H1 (cell line): ENCODE measurements at regions of chr16 and their contacts with region 1.

Region 1: GRCh38 chr16:12228602-12229499 is 252.3 kb downstream of the SNX29 start:
- DNase-seq: peak; percentile 53 to 80
- H3K4me3 ChIP-seq: no peak overlapping the region
- H3K27ac ChIP-seq: no peak overlapping the region
- H3K4me1 ChIP-seq: peaks cover 0 to 9% (median 5%) of the 10 kb centered on the region in 4 experiments; a peak in 3 of 7 replicates
- H3K27me3 ChIP-seq: no peaks in the 10 kb centered on the region
- CTCF ChIP-seq: peak; percentile 78 to 95 (median 87)
- EP300 ChIP-seq: no peak
- POLR2A ChIP-seq: no peak
- RAD21 ChIP-seq: peak; percentile 68 to 71

Region 2: GRCh38 chr16:12170091-12171040 is 58.5 kb before region 1 on chr16:
- CTCF ChIA-PET with region 1: interaction called, 15 read pairs
- POLR2A ChIA-PET with region 1: no interaction called
- DNase-seq: no peak
- H3K4me3 ChIP-seq: no peak overlapping the region
- H3K27ac ChIP-seq: no peak overlapping the region; the same call in 1 of the 2 replicates
- H3K4me1 ChIP-seq: no peaks in the 10 kb centered on the region
- H3K27me3 ChIP-seq: no peaks in the 10 kb centered on the region
- CTCF ChIP-seq: no peak
- EP300 ChIP-seq: no peak
- POLR2A ChIP-seq: no peak
- RAD21 ChIP-seq: no peak

Region 3: GRCh38 chr16:12240036-12240435 is 11.2 kb after region 1 on chr16:
- CTCF ChIA-PET with region 1: interaction called, 30 read pairs
- POLR2A ChIA-PET with region 1: no interaction called
- DNase-seq: no peak
- H3K4me3 ChIP-seq: no peak overlapping the region
- H3K27ac ChIP-seq: no peak overlapping the region
- H3K4me1 ChIP-seq: no peaks in the 10 kb centered on the region
- H3K27me3 ChIP-seq: no peaks in the 10 kb centered on the region
- CTCF ChIP-seq: no peak
- EP300 ChIP-seq: no peak
- POLR2A ChIP-seq: no peak
- RAD21 ChIP-seq: no peak

Region 4: DNA sequence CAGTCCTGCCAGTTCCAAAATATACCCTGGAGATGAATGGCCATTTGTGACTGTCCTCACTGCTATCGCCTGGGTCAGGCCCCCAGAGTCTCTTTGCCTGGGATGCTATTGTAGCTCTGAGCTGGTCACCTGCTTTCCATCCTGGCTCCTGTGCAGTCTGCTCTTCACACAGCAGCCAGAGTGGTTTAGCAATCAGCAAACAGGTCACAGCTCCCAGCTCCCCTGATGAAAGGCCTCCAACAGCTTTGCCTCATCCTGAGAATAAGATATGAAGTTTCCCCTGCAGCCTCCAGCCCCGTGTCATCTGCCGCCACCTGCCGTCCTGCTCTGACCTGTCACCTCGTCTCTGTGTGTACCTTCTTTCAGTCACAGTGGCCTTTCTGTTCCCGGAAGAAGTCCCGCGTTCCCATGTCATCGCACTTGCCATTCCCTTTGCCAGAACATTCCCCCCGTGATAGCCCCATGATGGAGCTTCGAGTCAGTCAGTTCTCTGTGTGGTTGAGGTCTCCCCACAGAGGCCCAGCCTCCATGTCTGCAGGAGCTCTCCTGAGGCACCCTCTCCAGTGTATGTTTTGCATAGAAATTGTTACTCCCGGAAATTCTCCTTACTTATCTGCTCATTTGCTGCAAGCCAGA is 29.2 kb after region 1 on chr16:
- CTCF ChIA-PET with region 1: interaction called, 49 read pairs
- POLR2A ChIA-PET with region 1: no interaction called
- DNase-seq: no peak
- H3K4me3 ChIP-seq: no peak overlapping the region
- H3K27ac ChIP-seq: no peak overlapping the region
- H3K4me1 ChIP-seq: no peaks in the 10 kb centered on the region
- H3K27me3 ChIP-seq: no peaks in the 10 kb centered on the region
- CTCF ChIP-seq: peak; percentile 36 to 47 (median 43)
- EP300 ChIP-seq: no peak
- POLR2A ChIP-seq: no peak
- RAD21 ChIP-seq: peak; percentile 40 to 51

Region 5: GRCh38 chr16:12265108-12265507 is 36.3 kb after region 1 on chr16:
- CTCF ChIA-PET with region 1: interaction called, 49 read pairs
- POLR2A ChIA-PET with region 1: no interaction called
- DNase-seq: no peak
- H3K4me3 ChIP-seq: no peak overlapping the region
- H3K27ac ChIP-seq: no peak overlapping the region
- H3K4me1 ChIP-seq: no peaks in the 10 kb centered on the region
- H3K27me3 ChIP-seq: no peaks in the 10 kb centered on the region
- CTCF ChIP-seq: no peak
- EP300 ChIP-seq: no peak
- POLR2A ChIP-seq: no peak
- RAD21 ChIP-seq: no peak

Region 6: GRCh38 chr16:12271006-12271405 is 42.2 kb after region 1 on chr16:
- CTCF ChIA-PET with region 1: interaction called, 14 read pairs
- POLR2A ChIA-PET with region 1: no interaction called
- DNase-seq: peak; percentile 31 to 54
- H3K4me3 ChIP-seq: no peak overlapping the region
- H3K27ac ChIP-seq: no peak overlapping the region
- H3K4me1 ChIP-seq: no peaks in the 10 kb centered on the region
- H3K27me3 ChIP-seq: no peaks in the 10 kb centered on the region
- CTCF ChIP-seq: peak; percentile 72 to 81 (median 78)
- EP300 ChIP-seq: no peak
- POLR2A ChIP-seq: no peak
- RAD21 ChIP-seq: peak; percentile 72 to 84

Region 7: GRCh38 chr16:12289175-12290063 is 60.6 kb after region 1 on chr16:
- CTCF ChIA-PET with region 1: no interaction called
- POLR2A ChIA-PET with region 1: no interaction called
- DNase-seq: no peak
- H3K4me3 ChIP-seq: no peak overlapping the region
- H3K27ac ChIP-seq: no peak overlapping the region
- H3K4me1 ChIP-seq: no peaks in the 10 kb centered on the region
- H3K27me3 ChIP-seq: no peaks in the 10 kb centered on the region
- CTCF ChIP-seq: no peak
- EP300 ChIP-seq: no peak
- POLR2A ChIP-seq: no peak
- RAD21 ChIP-seq: no peak